B cell (primary cell): ENCODE measurements at regions of chr5 and their contacts with region 1.

Region 1: DNA sequence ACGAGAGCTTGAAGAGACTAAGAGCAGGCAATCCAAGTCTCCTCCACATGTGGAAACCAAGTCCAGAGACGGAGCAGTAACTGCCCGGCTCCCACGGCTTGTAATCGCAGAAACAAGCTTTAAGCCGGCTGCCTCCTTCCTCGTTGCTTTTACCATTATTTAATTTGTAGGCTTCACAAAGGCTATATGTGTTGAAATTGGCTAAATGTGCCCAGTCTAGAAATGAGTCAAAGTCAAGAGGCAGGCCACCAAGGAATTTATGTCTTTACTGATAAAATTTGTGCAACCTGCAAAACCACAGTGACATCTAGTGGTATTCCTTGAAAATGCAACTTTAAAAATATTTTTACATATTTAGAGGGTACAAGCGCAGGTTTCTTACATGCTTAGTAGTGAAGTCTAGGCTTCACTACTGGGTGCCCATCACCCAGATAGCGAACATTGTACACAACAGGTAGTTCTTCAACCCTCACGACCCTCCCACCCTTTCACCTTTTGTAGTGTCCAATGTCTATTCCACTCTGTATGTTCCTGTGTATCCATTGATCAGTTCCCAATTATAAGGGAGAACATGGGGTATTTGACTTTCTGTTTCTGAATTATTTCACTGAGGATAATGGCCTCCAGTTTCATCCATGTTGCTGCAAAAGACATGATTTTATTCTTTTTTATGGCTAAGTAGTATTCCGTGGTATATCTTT is 33.5 kb upstream of the EBF1 start:
- DNase-seq: peak; percentile 71
- ATAC-seq: peak; percentile 58
- H3K4me3 ChIP-seq: no peak overlapping the region
- H3K4me3 Mint-ChIP-seq: no peak overlapping the region
- H3K27ac ChIP-seq: no peak overlapping the region
- H3K27ac Mint-ChIP-seq: no peak overlapping the region
- H3K4me1 ChIP-seq: no peaks in the 10 kb centered on the region
- H3K4me1 Mint-ChIP-seq: no peaks in the 10 kb centered on the region
- H3K27me3 ChIP-seq: no peaks in the 10 kb centered on the region
- H3K27me3 Mint-ChIP-seq: peaks cover 13% of the 10 kb centered on the region
- CTCF ChIP-seq: peak; percentile 91

Region 2: DNA sequence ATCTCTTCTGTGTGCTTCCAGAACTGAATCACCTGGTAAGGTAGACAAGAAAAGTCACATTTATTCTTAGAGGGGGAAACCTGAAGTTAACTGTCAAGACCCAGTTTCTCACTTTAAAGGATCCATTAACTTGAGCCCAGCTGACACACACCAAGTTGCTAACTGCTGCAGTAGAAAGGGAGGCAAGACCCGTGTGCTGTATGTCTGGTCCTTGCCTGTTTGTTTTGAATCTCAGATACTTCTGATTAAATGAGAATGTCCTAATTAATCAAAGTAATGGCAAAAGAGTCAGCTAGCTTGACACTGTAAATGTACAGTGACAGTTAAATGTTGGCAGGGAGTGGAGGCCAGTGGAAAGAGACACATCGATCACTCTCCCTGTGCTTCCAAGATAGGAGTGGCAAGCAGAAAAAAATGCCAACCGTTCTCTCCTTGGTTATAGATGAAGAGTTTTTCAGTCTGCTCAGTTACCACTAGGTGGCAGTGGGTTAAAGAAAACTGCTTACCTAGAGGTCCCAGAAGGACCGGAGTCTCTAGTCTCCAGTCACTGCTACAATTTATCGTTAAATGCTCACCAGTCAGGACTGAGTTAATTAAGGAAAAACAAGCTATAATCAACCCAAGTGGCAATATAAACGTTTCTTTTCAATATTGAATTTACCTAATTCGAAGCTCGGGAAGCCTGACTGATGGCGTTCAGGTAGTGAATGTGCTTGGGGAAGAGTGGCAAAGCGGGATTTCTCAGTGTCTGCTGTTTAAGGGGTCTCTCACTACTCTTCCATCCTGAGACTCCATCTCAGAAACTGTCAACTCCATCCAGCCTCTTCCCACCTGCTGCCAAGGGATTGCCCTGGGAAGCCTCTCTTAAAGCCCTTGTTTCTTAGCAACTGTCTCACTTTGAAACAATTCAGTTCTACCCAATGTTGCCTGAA is 1371.2 kb before region 1 on chr5:
- CTCF ChIA-PET with region 1: interaction called, 20 read pairs
- POLR2A ChIA-PET with region 1: no interaction called
- intact Hi-C with region 1: loop called (anchors 1 kb)
- DNase-seq: peak; percentile 63
- ATAC-seq: peak; percentile 76
- H3K4me3 ChIP-seq: no peak overlapping the region
- H3K4me3 Mint-ChIP-seq: no peak overlapping the region
- H3K27ac ChIP-seq: no peak overlapping the region
- H3K27ac Mint-ChIP-seq: no peak overlapping the region
- H3K4me1 ChIP-seq: peaks cover 0 to 4% of the 10 kb centered on the region in 2 donors
- H3K4me1 Mint-ChIP-seq: no peaks in the 10 kb centered on the region
- H3K27me3 ChIP-seq: no peaks in the 10 kb centered on the region
- H3K27me3 Mint-ChIP-seq: no peaks in the 10 kb centered on the region
- CTCF ChIP-seq: peak; percentile 82

Region 3: GRCh38 chr5:157948738-157949410 is 1184.3 kb before region 1 on chr5:
- CTCF ChIA-PET with region 1: interaction called, 11 read pairs
- POLR2A ChIA-PET with region 1: no interaction called
- intact Hi-C with region 1: loop called (anchors 1 kb)
- DNase-seq: peak; percentile 89
- ATAC-seq: peak; percentile 98
- H3K4me3 ChIP-seq: no peak overlapping the region
- H3K4me3 Mint-ChIP-seq: peak overlapping the region; percentile 33
- H3K27ac ChIP-seq: no peak overlapping the region
- H3K27ac Mint-ChIP-seq: no peak overlapping the region
- H3K4me1 ChIP-seq: peaks cover 6 to 8% of the 10 kb centered on the region in 2 donors
- H3K4me1 Mint-ChIP-seq: peaks cover 5% of the 10 kb centered on the region
- H3K27me3 ChIP-seq: peaks cover 0 to 4% (median 0%) of the 10 kb centered on the region in 4 experiments
- H3K27me3 Mint-ChIP-seq: peaks cover 18% of the 10 kb centered on the region
- CTCF ChIP-seq: peak; percentile 87

Region 4: GRCh38 chr5:158013939-158014338 is 1119.3 kb before region 1 on chr5:
- CTCF ChIA-PET with region 1: interaction called, 4 read pairs
- POLR2A ChIA-PET with region 1: no interaction called
- intact Hi-C with region 1: loop called (anchors 1 kb)
- DNase-seq: peak; percentile 4
- ATAC-seq: no peak
- H3K4me3 ChIP-seq: no peak overlapping the region
- H3K4me3 Mint-ChIP-seq: no peak overlapping the region
- H3K27ac ChIP-seq: no peak overlapping the region
- H3K27ac Mint-ChIP-seq: no peak overlapping the region
- H3K4me1 ChIP-seq: no peaks in the 10 kb centered on the region
- H3K4me1 Mint-ChIP-seq: no peaks in the 10 kb centered on the region
- H3K27me3 ChIP-seq: peaks cover 0 to 3% (median 0%) of the 10 kb centered on the region in 4 experiments
- H3K27me3 Mint-ChIP-seq: peaks cover 17% of the 10 kb centered on the region
- CTCF ChIP-seq: no peak

Region 5: GRCh38 chr5:158084292-158084691 is 1048.9 kb before region 1 on chr5:
- CTCF ChIA-PET with region 1: interaction called, 11 read pairs
- POLR2A ChIA-PET with region 1: no interaction called
- intact Hi-C with region 1: no loop called
- DNase-seq: no peak
- ATAC-seq: no peak
- H3K4me3 ChIP-seq: no peak overlapping the region
- H3K4me3 Mint-ChIP-seq: no peak overlapping the region
- H3K27ac ChIP-seq: no peak overlapping the region
- H3K27ac Mint-ChIP-seq: no peak overlapping the region
- H3K4me1 ChIP-seq: peaks cover 0 to 4% of the 10 kb centered on the region in 2 donors
- H3K4me1 Mint-ChIP-seq: peaks cover 4% of the 10 kb centered on the region
- H3K27me3 ChIP-seq: no peaks in the 10 kb centered on the region
- H3K27me3 Mint-ChIP-seq: peaks cover 3% of the 10 kb centered on the region
- CTCF ChIP-seq: no peak

Region 6: GRCh38 chr5:158174918-158175851 is 958.0 kb before region 1 on chr5:
- CTCF ChIA-PET with region 1: interaction called, 50 read pairs
- POLR2A ChIA-PET with region 1: no interaction called
- intact Hi-C with region 1: loop called (anchors 1 kb)
- DNase-seq: peak; percentile 82
- ATAC-seq: peak; percentile 88
- H3K4me3 ChIP-seq: no peak overlapping the region
- H3K4me3 Mint-ChIP-seq: no peak overlapping the region
- H3K27ac ChIP-seq: no peak overlapping the region
- H3K27ac Mint-ChIP-seq: no peak overlapping the region
- H3K4me1 ChIP-seq: peaks cover 22 to 34% of the 10 kb centered on the region in 2 donors
- H3K4me1 Mint-ChIP-seq: peaks cover 30% of the 10 kb centered on the region
- H3K27me3 ChIP-seq: no peaks in the 10 kb centered on the region
- H3K27me3 Mint-ChIP-seq: no peaks in the 10 kb centered on the region
- CTCF ChIP-seq: peak; percentile 82

Region 7: GRCh38 chr5:159149085-159149484 is 15.9 kb after region 1 on chr5:
- CTCF ChIA-PET with region 1: no interaction called
- POLR2A ChIA-PET with region 1: no interaction called
- intact Hi-C with region 1: no loop called
- DNase-seq: no peak
- ATAC-seq: no peak
- H3K4me3 ChIP-seq: no peak overlapping the region
- H3K4me3 Mint-ChIP-seq: no peak overlapping the region
- H3K27ac ChIP-seq: no peak overlapping the region
- H3K27ac Mint-ChIP-seq: no peak overlapping the region
- H3K4me1 ChIP-seq: peaks cover 5 to 7% of the 10 kb centered on the region in 2 donors
- H3K4me1 Mint-ChIP-seq: peaks cover 6% of the 10 kb centered on the region
- H3K27me3 ChIP-seq: no peaks in the 10 kb centered on the region
- H3K27me3 Mint-ChIP-seq: no peaks in the 10 kb centered on the region
- CTCF ChIP-seq: no peak

Region 8: GRCh38 chr5:159427180-159428012 is 294.2 kb after region 1 on chr5:
- CTCF ChIA-PET with region 1: no interaction called
- POLR2A ChIA-PET with region 1: no interaction called
- intact Hi-C with region 1: no loop called
- DNase-seq: peak; percentile 74
- ATAC-seq: peak; percentile 85
- H3K4me3 ChIP-seq: peak overlapping the region in 1 of 5 experiments; percentile 17
- H3K4me3 Mint-ChIP-seq: peak overlapping the region; percentile 76
- H3K27ac ChIP-seq: peak overlapping the region; percentile 63 to 84
- H3K27ac Mint-ChIP-seq: peak overlapping the region; percentile 89
- H3K4me1 ChIP-seq: peaks cover 24 to 59% of the 10 kb centered on the region in 2 donors
- H3K4me1 Mint-ChIP-seq: peaks cover 44% of the 10 kb centered on the region
- H3K27me3 ChIP-seq: no peaks in the 10 kb centered on the region
- H3K27me3 Mint-ChIP-seq: no peaks in the 10 kb centered on the region
- CTCF ChIP-seq: no peak

Region 9: DNA sequence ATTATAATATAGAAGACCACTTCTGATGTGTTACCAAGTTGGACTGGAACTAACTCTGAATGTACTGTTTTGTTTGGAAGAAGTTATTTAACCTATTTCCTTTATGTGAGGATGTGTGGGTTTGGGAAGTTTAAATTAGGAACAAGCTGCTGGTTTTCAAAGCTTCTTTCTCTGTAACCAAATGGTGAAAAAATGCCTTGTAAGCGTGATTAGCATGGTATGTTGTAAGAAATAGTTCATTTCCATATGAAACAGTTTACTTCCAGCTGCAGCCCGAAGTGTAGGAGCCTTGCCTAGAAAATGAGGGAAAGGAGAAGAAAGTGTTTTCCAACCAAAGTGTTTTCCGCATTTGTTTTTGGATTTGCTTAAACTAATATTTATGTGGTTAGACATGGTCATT is 911.8 kb after region 1 on chr5:
- CTCF ChIA-PET with region 1: no interaction called
- POLR2A ChIA-PET with region 1: no interaction called
- intact Hi-C with region 1: no loop called
- DNase-seq: no peak
- ATAC-seq: no peak
- H3K4me3 ChIP-seq: no peak overlapping the region
- H3K4me3 Mint-ChIP-seq: no peak overlapping the region
- H3K27ac ChIP-seq: no peak overlapping the region
- H3K27ac Mint-ChIP-seq: no peak overlapping the region
- H3K4me1 ChIP-seq: no peaks in the 10 kb centered on the region
- H3K4me1 Mint-ChIP-seq: no peaks in the 10 kb centered on the region
- H3K27me3 ChIP-seq: no peaks in the 10 kb centered on the region
- H3K27me3 Mint-ChIP-seq: no peaks in the 10 kb centered on the region
- CTCF ChIP-seq: no peak